BJ (cell line): ENCODE measurements at regions of chr16 and their contacts with region 1.

Region 1: GRCh38 chr16:67159593-67160406 is at the starts of genes FBXL8 and TRADD:
- DNase-seq: no peak
- H3K4me3 ChIP-seq: peak within 1 kb of the TSS; percentile 96
- H3K27me3 ChIP-seq: peaks cover 4% of the 10 kb centered on the region
- CTCF ChIP-seq: peak; percentile 70
- polyA plus RNA-seq, gene FBXL8: 4.1 and 5.7 TPM in 2 replicates
- polyA plus RNA-seq, gene TRADD: 11.1 and 18.6 TPM in 2 replicates

Region 2: DNA sequence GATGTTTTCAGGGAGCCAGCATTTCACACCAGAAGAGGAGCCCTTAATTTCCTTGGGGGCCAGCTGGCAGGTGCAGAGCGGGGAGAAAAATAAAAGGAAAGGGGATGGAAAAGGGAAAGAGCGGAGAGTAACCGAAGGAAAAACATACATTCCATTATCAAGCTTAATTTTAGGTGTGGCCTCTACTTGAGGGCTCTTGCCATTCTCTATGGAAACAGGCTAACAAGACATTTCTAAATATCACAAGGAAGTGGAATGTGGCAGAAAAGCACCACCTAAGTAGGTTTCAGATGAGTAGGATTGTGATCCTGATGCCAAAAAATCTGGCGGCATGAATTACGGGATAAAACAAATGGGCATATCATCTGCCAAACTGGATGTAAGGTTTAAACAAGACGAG is 407.4 kb before region 1 on chr16:
- CTCF ChIA-PET with region 1: no interaction called
- POLR2A ChIA-PET with region 1: no interaction called
- DNase-seq: no peak
- H3K4me3 ChIP-seq: no peak overlapping the region
- H3K27me3 ChIP-seq: no peaks in the 10 kb centered on the region; the same call in 1 of the 2 replicates
- CTCF ChIP-seq: no peak

Region 3: GRCh38 chr16:66954097-66954659 is 205.6 kb before region 1 on chr16:
- CTCF ChIA-PET with region 1: interaction called, 26 read pairs
- POLR2A ChIA-PET with region 1: no interaction called
- DNase-seq: no peak
- H3K4me3 ChIP-seq: no peak overlapping the region
- H3K27me3 ChIP-seq: peaks cover 5% of the 10 kb centered on the region
- CTCF ChIP-seq: peak; percentile 81

Region 4: GRCh38 chr16:66970775-66971725 is 188.8 kb before region 1 on chr16:
- CTCF ChIA-PET with region 1: interaction called, 55 read pairs
- POLR2A ChIA-PET with region 1: no interaction called
- DNase-seq: no peak
- H3K4me3 ChIP-seq: no peak overlapping the region
- H3K27me3 ChIP-seq: peaks cover 5% of the 10 kb centered on the region
- CTCF ChIP-seq: no peak

Region 5: DNA sequence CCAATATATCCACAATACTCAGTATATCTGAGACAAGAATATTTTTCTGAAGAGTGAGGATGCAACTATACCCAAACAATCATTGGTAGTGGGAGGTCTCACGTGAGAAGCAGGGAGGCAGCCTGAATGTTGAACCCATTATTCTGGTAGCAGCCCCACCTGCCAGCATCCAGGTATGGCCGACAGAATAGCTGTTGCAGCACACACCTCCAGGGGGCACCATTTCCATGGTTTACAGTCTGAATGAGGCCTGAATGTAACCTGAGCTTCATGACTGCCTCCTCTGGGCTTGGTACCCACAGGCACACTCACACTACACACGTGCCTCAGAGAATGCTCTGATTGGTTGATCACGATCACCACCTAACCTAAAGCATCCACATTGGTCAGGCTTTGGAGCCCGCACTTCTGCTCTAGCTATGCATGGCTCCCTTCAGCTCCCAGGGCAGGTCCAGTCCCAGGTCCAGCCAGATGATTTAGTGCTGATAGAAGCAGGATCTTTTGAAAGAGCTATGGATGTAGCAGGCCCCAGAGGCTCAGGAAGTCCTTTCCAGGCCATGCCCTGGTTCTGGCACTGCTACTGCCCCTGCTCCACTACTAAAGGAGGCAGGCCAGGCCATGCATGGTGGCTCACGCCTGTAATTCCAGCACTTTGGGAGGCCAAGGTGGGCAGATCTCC is 141.9 kb before region 1 on chr16:
- CTCF ChIA-PET with region 1: interaction called, 118 read pairs
- POLR2A ChIA-PET with region 1: no interaction called
- DNase-seq: peak; percentile 44
- H3K4me3 ChIP-seq: no peak overlapping the region
- H3K27me3 ChIP-seq: no peaks in the 10 kb centered on the region
- CTCF ChIP-seq: peak; percentile 72

Region 6: GRCh38 chr16:67137605-67138004 is 22.2 kb before region 1 on chr16:
- CTCF ChIA-PET with region 1: interaction called, 21 read pairs
- POLR2A ChIA-PET with region 1: no interaction called
- DNase-seq: no peak
- H3K4me3 ChIP-seq: no peak overlapping the region
- H3K27me3 ChIP-seq: no peaks in the 10 kb centered on the region
- CTCF ChIP-seq: no peak

Region 7: DNA sequence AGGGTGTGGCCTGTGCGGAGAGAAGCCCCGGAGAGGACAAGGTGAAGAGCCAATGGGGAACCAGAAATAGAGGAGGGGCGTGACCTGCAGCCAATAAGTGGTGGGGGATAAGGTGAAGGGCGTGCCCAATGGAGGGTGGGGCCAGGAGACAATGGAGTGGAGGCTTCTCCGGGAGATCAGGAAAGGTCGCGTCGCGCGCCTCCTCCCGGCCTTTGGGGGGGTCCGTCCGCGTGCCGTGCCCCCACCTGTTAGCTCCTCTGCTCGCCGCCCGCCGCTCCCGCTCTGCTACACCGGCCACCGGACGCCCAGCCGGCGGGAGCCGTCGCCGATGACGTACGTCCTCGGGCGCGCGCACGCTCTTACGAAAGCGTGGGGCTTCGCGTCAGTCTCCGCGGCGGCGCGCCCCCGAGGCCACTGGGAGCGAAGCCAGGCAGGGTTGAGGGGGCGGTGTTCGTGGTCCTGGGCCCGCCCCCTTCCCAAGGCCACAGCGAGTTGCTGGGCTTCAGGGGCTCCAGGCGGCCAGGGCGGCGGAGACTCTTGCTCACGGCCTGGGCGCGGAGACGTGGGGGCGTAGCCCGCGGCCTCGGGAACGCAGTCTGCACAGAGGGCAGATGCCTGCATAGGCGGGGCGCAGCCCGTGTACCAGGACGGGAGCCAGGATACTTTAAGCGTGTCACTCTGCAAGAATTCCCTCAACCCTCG is 24.0 kb after region 1 on chr16 and contains the start of gene MATCAP1:
- CTCF ChIA-PET with region 1: interaction called, 24 read pairs
- POLR2A ChIA-PET with region 1: no interaction called
- DNase-seq: peak; percentile 83
- H3K4me3 ChIP-seq: peak within 1 kb of the TSS; percentile 60
- H3K27me3 ChIP-seq: no peaks in the 10 kb centered on the region
- CTCF ChIP-seq: no peak
- polyA plus RNA-seq, gene MATCAP1: 8.7 and 13.1 TPM in 2 replicates

Region 8: DNA sequence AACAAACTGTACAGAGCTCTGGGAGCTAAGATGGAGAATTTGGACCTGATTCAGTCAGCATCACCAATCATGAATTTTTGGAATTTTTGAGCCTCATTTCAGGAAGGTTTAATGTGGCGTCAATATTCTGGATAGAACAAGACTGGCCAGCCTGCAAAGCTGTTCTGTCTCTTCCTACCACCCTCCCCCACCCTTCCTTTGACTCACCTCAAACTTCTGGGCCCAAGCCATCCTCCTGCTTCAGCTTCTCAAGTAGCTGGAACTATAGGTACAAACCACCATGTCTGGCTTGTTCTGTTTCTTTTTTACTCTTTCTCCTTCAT is 435.2 kb after region 1 on chr16:
- CTCF ChIA-PET with region 1: no interaction called
- POLR2A ChIA-PET with region 1: no interaction called
- DNase-seq: no peak
- H3K4me3 ChIP-seq: no peak overlapping the region
- H3K27me3 ChIP-seq: no peaks in the 10 kb centered on the region
- CTCF ChIP-seq: no peak